ENCODE measurements at regions of chr3 and their contacts with region 1.

Region 1: DNA sequence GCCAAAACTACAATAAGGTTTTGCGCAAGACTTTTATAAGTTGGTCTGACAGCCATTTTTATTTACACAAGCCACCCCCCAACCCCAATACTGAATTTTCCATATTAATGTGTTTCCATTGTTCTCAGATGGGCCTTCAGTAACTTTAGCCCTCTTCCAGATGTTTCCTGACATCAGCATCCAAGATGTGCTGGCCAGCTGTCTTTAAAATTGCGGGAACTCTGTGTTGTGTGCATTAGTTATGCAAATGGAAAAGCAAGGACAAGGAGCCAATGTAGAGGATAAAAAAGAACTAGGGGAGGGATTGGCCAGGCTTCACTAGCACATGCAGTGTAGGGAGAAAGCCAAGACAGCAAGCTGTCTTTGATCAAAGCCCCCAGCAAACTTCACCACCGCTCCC is 45.4 kb downstream of the COMMD2 start:
- DNase-seq: no peak
- ATAC-seq: no peak
- H3K4me3 ChIP-seq: no peak overlapping the region
- H3K4me3 Mint-ChIP-seq: no peak overlapping the region
- H3K27ac ChIP-seq: no peak overlapping the region
- H3K27ac Mint-ChIP-seq: no peak overlapping the region
- H3K4me1 ChIP-seq: no peaks in the 10 kb centered on the region
- H3K4me1 Mint-ChIP-seq: peaks cover 0 to 2% (median 2%) of the 10 kb centered on the region in 3 donors
- H3K27me3 ChIP-seq: no peaks in the 10 kb centered on the region
- H3K27me3 Mint-ChIP-seq: no peaks in the 10 kb centered on the region

Region 2: DNA sequence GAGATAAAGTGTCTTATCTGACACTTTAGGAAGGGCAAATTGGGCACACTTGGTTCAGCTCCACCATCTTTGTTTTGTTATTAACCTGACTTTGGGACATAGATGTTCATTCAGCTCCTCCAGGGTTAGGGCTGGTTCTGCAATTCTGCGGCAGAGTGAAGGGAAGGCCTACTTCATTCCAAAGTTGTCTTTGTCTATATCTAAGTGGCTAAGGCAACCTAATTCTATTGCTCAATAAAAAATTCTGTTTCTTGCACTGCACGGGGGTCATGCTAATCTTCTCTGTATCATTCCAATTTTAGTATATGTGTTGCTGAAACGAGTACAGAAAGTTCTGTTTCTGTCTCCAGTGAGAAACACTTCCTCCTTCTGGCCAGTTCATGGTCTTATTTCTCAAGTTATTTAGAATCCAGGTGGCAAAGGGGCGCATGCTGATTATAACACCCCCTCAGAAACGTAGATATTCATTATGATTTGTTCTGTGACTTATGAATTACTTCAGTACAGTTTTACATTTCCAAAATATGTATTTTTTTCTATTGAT is 210.3 kb after region 1 on chr3:
- CTCF ChIA-PET with region 1: no interaction called
- POLR2A ChIA-PET with region 1: interaction called in 1 of 2 experiments, 10 read pairs
- DNase-seq: no peak
- ATAC-seq: no peak
- H3K4me3 ChIP-seq: no peak overlapping the region
- H3K4me3 Mint-ChIP-seq: no peak overlapping the region
- H3K27ac ChIP-seq: no peak overlapping the region
- H3K27ac Mint-ChIP-seq: no peak overlapping the region
- H3K4me1 ChIP-seq: no peaks in the 10 kb centered on the region
- H3K4me1 Mint-ChIP-seq: no peaks in the 10 kb centered on the region
- H3K27me3 ChIP-seq: no peaks in the 10 kb centered on the region
- H3K27me3 Mint-ChIP-seq: no peaks in the 10 kb centered on the region

Measured in T-cell (primary cell).